MCF 10A (cell line): ENCODE measurements at regions of chr6 and their contacts with region 1.

Region 1: GRCh38 chr6:35731736-35732532 is 4.9 kb upstream of the ARMC12 start:
- DNase-seq: peak; percentile 97
- H3K4me3 Mint-ChIP-seq: peak overlapping the region; percentile 73
- H3K27ac Mint-ChIP-seq: peak overlapping the region; percentile 81
- H3K4me1 Mint-ChIP-seq: peaks cover 55% of the 10 kb centered on the region
- H3K27me3 Mint-ChIP-seq: no peaks in the 10 kb centered on the region
- CTCF ChIP-seq: no peak

Region 2: GRCh38 chr6:35468181-35468979 is 263.6 kb before region 1 on chr6 and contains the start of gene RPL10A:
- CTCF ChIA-PET with region 1: interaction called, 4 read pairs
- POLR2A ChIA-PET with region 1: interaction called, 4 read pairs
- intact Hi-C with region 1: loop called (anchors 2 kb)
- DNase-seq: peak; percentile 97
- H3K4me3 Mint-ChIP-seq: peak within 1 kb of the TSS; percentile 95
- H3K27ac Mint-ChIP-seq: peak within 1 kb of the TSS; percentile 97
- H3K4me1 Mint-ChIP-seq: peaks cover 13% of the 10 kb centered on the region
- H3K27me3 Mint-ChIP-seq: no peaks in the 10 kb centered on the region
- CTCF ChIP-seq: peak; percentile 92
- total RNA-seq, gene RPL10A: 2,403 and 2,457 TPM in 2 replicates

Region 3: DNA sequence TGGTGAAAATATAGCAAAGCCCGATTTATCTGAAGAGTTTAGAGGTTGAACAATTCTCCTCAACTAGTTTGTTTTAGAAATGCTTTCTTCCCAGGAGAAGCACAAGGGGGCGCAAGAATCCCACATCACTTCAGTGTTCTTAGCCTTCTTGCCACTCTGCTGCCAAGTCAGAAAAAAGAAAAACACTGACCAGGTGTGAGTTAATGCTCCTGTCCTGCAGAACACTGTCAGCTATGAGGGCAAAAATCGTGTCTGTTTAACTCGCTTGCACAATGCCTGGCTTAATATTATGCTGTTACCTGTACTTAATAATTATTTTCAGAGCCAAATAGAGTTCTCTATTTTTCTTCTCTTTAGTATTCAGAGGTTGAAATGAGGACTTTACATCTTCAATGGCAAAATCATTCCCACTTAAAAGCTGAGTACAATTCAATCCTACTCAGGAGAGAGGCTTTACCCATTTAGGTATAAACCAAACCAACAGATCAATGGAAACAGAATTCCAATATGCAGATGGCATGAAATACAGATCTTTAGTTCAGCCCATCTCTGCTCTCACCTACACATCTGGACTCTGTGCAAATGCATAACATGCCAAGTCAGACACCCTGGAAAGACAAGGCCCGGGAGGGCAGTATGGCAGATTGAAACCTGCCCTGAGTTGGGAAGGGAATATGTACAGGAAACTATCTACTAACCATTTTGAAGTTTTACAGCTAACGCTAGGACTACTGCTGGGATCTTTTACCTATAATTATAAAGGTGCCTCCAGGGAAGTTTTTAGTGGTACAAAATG is 147.8 kb before region 1 on chr6:
- CTCF ChIA-PET with region 1: interaction called, 56 read pairs
- POLR2A ChIA-PET with region 1: interaction called, 28 read pairs
- intact Hi-C with region 1: loop called (anchors 1 kb)
- DNase-seq: peak; percentile 82
- H3K4me3 Mint-ChIP-seq: no peak overlapping the region
- H3K27ac Mint-ChIP-seq: peak overlapping the region; percentile 75
- H3K4me1 Mint-ChIP-seq: peaks cover 40% of the 10 kb centered on the region
- H3K27me3 Mint-ChIP-seq: no peaks in the 10 kb centered on the region
- CTCF ChIP-seq: peak; percentile 65

Region 4: GRCh38 chr6:35624341-35625070 is 107.4 kb before region 1 on chr6:
- CTCF ChIA-PET with region 1: interaction called, 33 read pairs
- POLR2A ChIA-PET with region 1: interaction called, 9 read pairs
- intact Hi-C with region 1: no loop called
- DNase-seq: no peak
- H3K4me3 Mint-ChIP-seq: no peak overlapping the region
- H3K27ac Mint-ChIP-seq: peak overlapping the region; percentile 61
- H3K4me1 Mint-ChIP-seq: peaks cover 13% of the 10 kb centered on the region
- H3K27me3 Mint-ChIP-seq: no peaks in the 10 kb centered on the region
- CTCF ChIP-seq: no peak

Region 5: GRCh38 chr6:35663447-35664235 is 68.3 kb before region 1 on chr6:
- CTCF ChIA-PET with region 1: interaction called, 12 read pairs
- POLR2A ChIA-PET with region 1: interaction called, 102 read pairs
- intact Hi-C with region 1: no loop called
- DNase-seq: peak; percentile 29
- H3K4me3 Mint-ChIP-seq: no peak overlapping the region
- H3K27ac Mint-ChIP-seq: no peak overlapping the region
- H3K4me1 Mint-ChIP-seq: peaks cover 10% of the 10 kb centered on the region
- H3K27me3 Mint-ChIP-seq: no peaks in the 10 kb centered on the region
- CTCF ChIP-seq: no peak

Region 6: GRCh38 chr6:35710241-35710847 is 21.6 kb before region 1 on chr6:
- CTCF ChIA-PET with region 1: interaction called, 5 read pairs
- POLR2A ChIA-PET with region 1: interaction called, 68 read pairs
- intact Hi-C with region 1: no loop called
- DNase-seq: peak; percentile 86
- H3K4me3 Mint-ChIP-seq: no peak overlapping the region
- H3K27ac Mint-ChIP-seq: no peak overlapping the region
- H3K4me1 Mint-ChIP-seq: peaks cover 13% of the 10 kb centered on the region
- H3K27me3 Mint-ChIP-seq: no peaks in the 10 kb centered on the region
- CTCF ChIP-seq: no peak

Region 7: GRCh38 chr6:35797837-35798526 is 66.0 kb after region 1 on chr6:
- CTCF ChIA-PET with region 1: no interaction called
- POLR2A ChIA-PET with region 1: no interaction called
- intact Hi-C with region 1: no loop called
- DNase-seq: no peak
- H3K4me3 Mint-ChIP-seq: no peak overlapping the region
- H3K27ac Mint-ChIP-seq: no peak overlapping the region
- H3K4me1 Mint-ChIP-seq: no peaks in the 10 kb centered on the region
- H3K27me3 Mint-ChIP-seq: peaks cover 8% of the 10 kb centered on the region
- CTCF ChIP-seq: no peak